HCT116 (cell line): ENCODE measurements at regions of chr3 and their contacts with region 1.

Region 1: GRCh38 chr3:180601688-180602666 is at the start of gene TTC14:
- DNase-seq: peak; percentile 94
- ATAC-seq: peak; percentile 95
- H3K4me3 ChIP-seq: peak within 1 kb of the TSS; percentile 89 to 95
- H3K27ac ChIP-seq: peak within 1 kb of the TSS; percentile 77
- H3K4me1 ChIP-seq: peaks cover 8 to 12% of the 10 kb centered on the region in 2 experiments; a peak in 3 of 4 replicates
- H3K27me3 ChIP-seq: no peaks in the 10 kb centered on the region
- CTCF ChIP-seq: no peak
- POLR2A ChIP-seq: peak; percentile 64
- RAD21 ChIP-seq: no peak
- total RNA-seq, gene TTC14: 31.5 TPM

Region 2: GRCh38 chr3:180912304-180913296 is 310.6 kb after region 1 on chr3 and contains the start of gene FXR1:
- CTCF ChIA-PET with region 1: no interaction called
- POLR2A ChIA-PET with region 1: no interaction called
- RAD21 ChIA-PET with region 1: no interaction called
- intact Hi-C with region 1: loop called (anchors 10 kb)
- DNase-seq: peak; percentile 81
- ATAC-seq: peak; percentile 97
- H3K4me3 ChIP-seq: peak within 1 kb of the TSS; percentile 93 to 95
- H3K27ac ChIP-seq: peak within 1 kb of the TSS; percentile 76
- H3K4me1 ChIP-seq: peaks cover 11 to 19% of the 10 kb centered on the region in 2 experiments; a peak in 3 of 4 replicates
- H3K27me3 ChIP-seq: no peaks in the 10 kb centered on the region
- CTCF ChIP-seq: peak in 2 of 3 experiments; percentile 63 to 69; a peak in 4 of 6 replicates
- POLR2A ChIP-seq: peak; percentile 87
- RAD21 ChIP-seq: peak; percentile 41; the same call in 1 of the 2 replicates
- total RNA-seq, gene FXR1: 215 TPM